SK-N-SH (cell line): ENCODE measurements at regions of chr1 and their contacts with region 1.

Region 1: DNA sequence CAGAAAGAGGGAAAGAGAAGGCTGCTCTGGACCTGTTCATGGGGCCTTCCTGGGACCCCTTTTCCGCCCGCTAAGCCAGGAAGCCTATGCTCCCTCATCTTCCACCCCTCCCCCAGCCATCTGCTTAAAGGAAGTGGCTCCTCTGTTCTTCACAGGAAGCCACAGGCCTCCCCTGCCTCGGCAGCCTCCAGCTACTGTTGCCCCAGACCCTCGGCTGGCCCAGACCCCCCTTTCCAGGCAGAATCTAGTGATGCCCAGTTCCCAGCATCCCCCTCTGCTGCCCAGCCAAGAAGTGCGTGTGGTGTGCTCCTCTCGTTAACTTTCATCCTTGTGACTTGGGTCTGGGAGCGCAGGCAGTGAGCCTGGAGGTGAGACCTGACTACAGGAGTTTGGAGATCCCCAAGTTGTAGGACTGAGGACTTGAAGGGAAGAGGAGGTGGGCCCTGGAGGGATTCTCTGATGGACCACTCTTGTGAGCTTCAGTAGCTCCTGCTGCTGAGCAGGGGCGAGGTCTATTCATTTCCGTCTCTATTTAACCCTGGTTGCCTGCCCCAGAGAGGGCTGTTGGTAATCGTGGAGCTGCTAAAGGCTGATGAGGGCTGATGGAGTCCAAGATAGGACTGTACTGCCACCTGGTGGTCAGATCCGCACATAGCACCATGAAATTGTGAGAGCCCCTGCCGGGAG is 9.1 kb downstream of the IFI6 start:
- DNase-seq: peak; percentile 86
- H3K4me3 ChIP-seq: no peak overlapping the region; a peak in 1 of 4 replicates
- H3K27ac ChIP-seq: peak overlapping the region in 1 of 2 experiments; percentile 2; a peak in 1 of 4 replicates
- H3K4me1 ChIP-seq: peaks cover 6 to 9% of the 10 kb centered on the region in 2 experiments; a peak in 2 of 4 replicates
- H3K27me3 ChIP-seq: no peaks in the 10 kb centered on the region
- CTCF ChIP-seq: peak; percentile 90
- EP300 ChIP-seq: no peak
- RAD21 ChIP-seq: peak; percentile 91

Region 2: DNA sequence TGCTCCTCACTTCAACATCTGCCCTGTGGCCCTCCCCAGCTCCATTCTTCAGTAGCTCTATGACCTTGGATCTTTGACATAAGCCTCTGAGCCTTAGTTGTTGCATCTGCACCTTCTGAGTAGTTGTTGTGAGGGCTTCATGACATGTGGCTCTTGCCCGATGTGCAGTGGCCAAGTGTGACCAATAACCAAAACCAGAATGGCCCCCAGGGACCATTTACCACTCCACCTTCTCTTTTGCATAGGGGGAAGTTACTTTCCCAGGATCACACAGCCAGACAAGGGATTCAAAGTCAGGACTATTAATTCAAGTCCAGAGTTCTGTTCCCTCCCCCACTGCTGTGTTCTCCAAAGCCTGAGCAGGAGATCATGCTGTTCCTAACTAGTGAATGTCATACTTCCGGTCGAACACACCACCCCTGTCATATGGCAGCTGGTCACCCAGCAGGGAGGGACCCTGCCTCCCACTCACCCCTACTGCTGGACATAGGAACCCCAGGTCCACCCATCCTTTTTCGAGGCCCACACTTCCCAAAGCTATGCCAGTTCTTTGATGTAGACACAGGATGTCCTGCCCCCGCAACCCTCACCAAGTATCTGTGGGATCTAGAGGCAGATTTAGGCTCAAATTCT is 31.9 kb before region 1 on chr1:
- CTCF ChIA-PET with region 1: interaction called, 526 read pairs
- POLR2A ChIA-PET with region 1: no interaction called
- DNase-seq: no peak
- H3K4me3 ChIP-seq: no peak overlapping the region
- H3K27ac ChIP-seq: no peak overlapping the region
- H3K4me1 ChIP-seq: peaks cover 0 to 6% of the 10 kb centered on the region in 2 experiments; a peak in 1 of 4 replicates
- H3K27me3 ChIP-seq: no peaks in the 10 kb centered on the region
- CTCF ChIP-seq: no peak
- EP300 ChIP-seq: no peak
- RAD21 ChIP-seq: no peak

Region 3: GRCh38 chr1:27650539-27651175 is 12.2 kb before region 1 on chr1:
- CTCF ChIA-PET with region 1: interaction called, 13 read pairs
- POLR2A ChIA-PET with region 1: no interaction called
- DNase-seq: no peak
- H3K4me3 ChIP-seq: no peak overlapping the region
- H3K27ac ChIP-seq: no peak overlapping the region
- H3K4me1 ChIP-seq: peaks cover 7% of the 10 kb centered on the region in 2 experiments; a peak in 2 of 4 replicates
- H3K27me3 ChIP-seq: no peaks in the 10 kb centered on the region
- CTCF ChIP-seq: no peak
- EP300 ChIP-seq: no peak
- RAD21 ChIP-seq: no peak